ENCODE measurements at regions of chr22 and their contacts with region 1.

Region 1: DNA sequence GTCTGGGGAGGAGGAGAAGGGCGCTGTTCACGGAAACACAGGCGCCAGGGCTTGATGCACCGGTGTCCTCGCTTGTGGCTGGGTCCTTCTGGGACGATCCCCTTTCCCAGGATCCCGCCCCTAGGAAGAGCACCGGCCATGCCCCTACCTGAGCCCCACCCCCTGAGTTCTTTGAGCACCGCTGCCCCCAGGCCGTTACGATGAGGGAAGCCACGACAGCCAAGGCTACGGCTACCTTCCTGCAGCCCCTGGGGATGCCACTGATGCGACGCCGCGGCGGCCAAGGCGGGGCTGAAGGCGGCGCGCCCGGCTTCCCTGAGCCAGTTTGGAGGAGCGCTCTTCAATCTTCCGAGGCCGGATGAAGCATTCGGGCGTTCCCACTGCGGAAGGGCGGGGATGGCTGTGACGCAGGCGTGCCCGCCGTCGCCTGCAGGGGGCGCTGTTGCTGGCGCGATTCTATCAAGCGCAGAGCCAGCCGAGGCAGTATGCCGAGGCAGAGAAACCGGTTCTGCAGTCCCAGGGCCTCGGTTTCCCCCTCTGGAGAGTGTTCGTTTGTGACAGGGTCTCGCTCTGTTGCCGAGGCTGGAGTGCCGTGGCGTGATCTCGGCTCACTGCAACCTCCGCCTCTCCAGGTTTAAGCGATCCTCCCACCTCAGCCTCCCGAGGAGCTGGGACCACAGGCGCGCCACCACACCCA is 9.7 kb upstream of the NEFH start:
- DNase-seq: peak; percentile 62
- ATAC-seq: peak; percentile 94
- H3K4me3 ChIP-seq: peak overlapping the region; percentile 45 to 62
- H3K27ac ChIP-seq: peak overlapping the region; percentile 28; the same call in 1 of the 2 replicates
- H3K4me1 ChIP-seq: peaks cover 12 to 25% of the 10 kb centered on the region in 2 experiments
- H3K27me3 ChIP-seq: no peaks in the 10 kb centered on the region
- CTCF ChIP-seq: peak; percentile 60 to 97 (median 96); a peak in 5 of 6 replicates
- POLR2A ChIP-seq: no peak
- RAD21 ChIP-seq: peak; percentile 60

Region 2: DNA sequence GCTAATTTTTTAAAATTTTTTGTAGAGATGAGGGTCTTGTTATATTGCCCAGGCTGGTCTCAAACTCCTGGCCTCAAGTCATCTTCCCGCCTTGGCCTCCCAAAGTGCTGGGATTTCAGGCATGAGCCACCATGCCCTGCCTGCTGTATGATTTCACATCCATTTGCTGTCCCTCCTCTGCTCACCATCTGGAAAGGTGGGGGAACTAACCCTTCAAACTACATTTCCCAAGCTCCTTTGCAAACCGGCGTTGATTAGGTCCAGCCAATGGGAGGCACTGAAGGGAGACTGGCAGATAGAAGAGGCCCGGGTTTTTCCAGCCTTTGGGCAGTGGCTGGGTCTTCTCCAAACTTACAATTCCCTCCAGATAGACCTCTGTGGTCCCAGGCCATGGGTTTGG is 12.6 kb before region 1 on chr22:
- CTCF ChIA-PET with region 1: interaction called, 14 read pairs
- POLR2A ChIA-PET with region 1: no interaction called
- RAD21 ChIA-PET with region 1: no interaction called
- intact Hi-C with region 1: no loop called
- DNase-seq: peak; percentile 70
- ATAC-seq: peak; percentile 99
- H3K4me3 ChIP-seq: no peak overlapping the region
- H3K27ac ChIP-seq: no peak overlapping the region
- H3K4me1 ChIP-seq: peaks cover 0 to 6% of the 10 kb centered on the region in 2 experiments; a peak in 1 of 4 replicates
- H3K27me3 ChIP-seq: no peaks in the 10 kb centered on the region
- CTCF ChIP-seq: no peak
- POLR2A ChIP-seq: no peak
- RAD21 ChIP-seq: no peak

Measured in HCT116 (cell line).